Endothelial cell of umbilical vein (primary cell): ENCODE measurements at regions of chr7 and their contacts with region 1.

Region 1: GRCh38 chr7:12855036-12855435 is 167.6 kb downstream of the ARL4A start:
- DNase-seq: peak; percentile 62
- H3K4me3 ChIP-seq: no peak overlapping the region
- H3K27ac ChIP-seq: no peak overlapping the region
- H3K4me1 ChIP-seq: peaks cover 1% of the 10 kb centered on the region
- H3K27me3 ChIP-seq: no peaks in the 10 kb centered on the region
- CTCF ChIP-seq: no peak
- POLR2A ChIP-seq: no peak

Region 2: GRCh38 chr7:12815871-12816270 is 39.2 kb before region 1 on chr7:
- CTCF ChIA-PET with region 1: no interaction called
- POLR2A ChIA-PET with region 1: no interaction called
- dilution Hi-C with region 1: no loop called
- intact Hi-C with region 1: no loop called
- DNase-seq: peak; percentile 14
- H3K4me3 ChIP-seq: no peak overlapping the region
- H3K27ac ChIP-seq: no peak overlapping the region
- H3K4me1 ChIP-seq: no peaks in the 10 kb centered on the region
- H3K27me3 ChIP-seq: no peaks in the 10 kb centered on the region
- CTCF ChIP-seq: no peak
- POLR2A ChIP-seq: no peak

Region 3: GRCh38 chr7:12907774-12908173 is 52.7 kb after region 1 on chr7:
- CTCF ChIA-PET with region 1: no interaction called
- POLR2A ChIA-PET with region 1: no interaction called
- dilution Hi-C with region 1: no loop called
- intact Hi-C with region 1: loop called (anchors 5 kb)
- DNase-seq: no peak
- H3K4me3 ChIP-seq: no peak overlapping the region
- H3K27ac ChIP-seq: no peak overlapping the region
- H3K4me1 ChIP-seq: no peaks in the 10 kb centered on the region
- H3K27me3 ChIP-seq: no peaks in the 10 kb centered on the region
- CTCF ChIP-seq: no peak
- POLR2A ChIP-seq: no peak